ENCODE measurements at regions of chr2 and their contacts with region 1.

Region 1: GRCh38 chr2:38315707-38316333 is 61.3 kb downstream of the ATL2 start:
- DNase-seq: peak; percentile 63
- H3K4me3 ChIP-seq: no peak overlapping the region
- H3K27ac ChIP-seq: no peak overlapping the region
- H3K4me1 ChIP-seq: no peaks in the 10 kb centered on the region
- CTCF ChIP-seq: peak; percentile 91

Region 2: GRCh38 chr2:38159597-38159996 is 156.2 kb before region 1 on chr2:
- CTCF ChIA-PET with region 1: no interaction called
- POLR2A ChIA-PET with region 1: no interaction called
- intact Hi-C with region 1: no loop called
- DNase-seq: no peak
- H3K4me3 ChIP-seq: no peak overlapping the region
- H3K27ac ChIP-seq: no peak overlapping the region
- H3K4me1 ChIP-seq: no peaks in the 10 kb centered on the region
- CTCF ChIP-seq: no peak

Region 3: DNA sequence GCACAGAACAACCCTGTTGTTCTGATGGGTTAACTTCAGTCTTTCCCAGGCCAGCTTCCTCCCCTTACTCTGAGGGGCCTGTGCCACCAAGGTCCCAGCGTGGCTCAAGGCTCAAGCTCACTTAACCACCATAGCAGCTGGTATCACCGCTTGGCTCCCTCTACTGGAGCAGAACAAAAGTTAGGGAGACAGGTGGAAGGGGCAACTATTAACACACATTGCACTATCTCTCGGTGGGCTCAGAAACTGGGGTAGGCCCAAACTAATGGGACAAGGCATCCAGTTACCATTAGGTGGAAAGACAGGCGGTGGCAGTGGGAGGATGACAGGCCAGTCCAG is 149.9 kb after region 1 on chr2:
- CTCF ChIA-PET with region 1: interaction called, 16 read pairs
- POLR2A ChIA-PET with region 1: interaction called, 8 read pairs
- intact Hi-C with region 1: loop called (anchors 1 kb)
- DNase-seq: peak; percentile 88
- H3K4me3 ChIP-seq: no peak overlapping the region
- H3K27ac ChIP-seq: peak overlapping the region; percentile 13
- H3K4me1 ChIP-seq: peaks cover 24% of the 10 kb centered on the region
- CTCF ChIP-seq: peak; percentile 90

Region 4: GRCh38 chr2:38508311-38509039 is 192.7 kb after region 1 on chr2:
- CTCF ChIA-PET with region 1: interaction called, 7 read pairs
- POLR2A ChIA-PET with region 1: interaction called, 5 read pairs
- intact Hi-C with region 1: loop called (anchors 1 kb)
- DNase-seq: peak; percentile 94
- H3K4me3 ChIP-seq: no peak overlapping the region
- H3K27ac ChIP-seq: no peak overlapping the region
- H3K4me1 ChIP-seq: peaks cover 12% of the 10 kb centered on the region
- CTCF ChIP-seq: peak; percentile 98

Region 5: DNA sequence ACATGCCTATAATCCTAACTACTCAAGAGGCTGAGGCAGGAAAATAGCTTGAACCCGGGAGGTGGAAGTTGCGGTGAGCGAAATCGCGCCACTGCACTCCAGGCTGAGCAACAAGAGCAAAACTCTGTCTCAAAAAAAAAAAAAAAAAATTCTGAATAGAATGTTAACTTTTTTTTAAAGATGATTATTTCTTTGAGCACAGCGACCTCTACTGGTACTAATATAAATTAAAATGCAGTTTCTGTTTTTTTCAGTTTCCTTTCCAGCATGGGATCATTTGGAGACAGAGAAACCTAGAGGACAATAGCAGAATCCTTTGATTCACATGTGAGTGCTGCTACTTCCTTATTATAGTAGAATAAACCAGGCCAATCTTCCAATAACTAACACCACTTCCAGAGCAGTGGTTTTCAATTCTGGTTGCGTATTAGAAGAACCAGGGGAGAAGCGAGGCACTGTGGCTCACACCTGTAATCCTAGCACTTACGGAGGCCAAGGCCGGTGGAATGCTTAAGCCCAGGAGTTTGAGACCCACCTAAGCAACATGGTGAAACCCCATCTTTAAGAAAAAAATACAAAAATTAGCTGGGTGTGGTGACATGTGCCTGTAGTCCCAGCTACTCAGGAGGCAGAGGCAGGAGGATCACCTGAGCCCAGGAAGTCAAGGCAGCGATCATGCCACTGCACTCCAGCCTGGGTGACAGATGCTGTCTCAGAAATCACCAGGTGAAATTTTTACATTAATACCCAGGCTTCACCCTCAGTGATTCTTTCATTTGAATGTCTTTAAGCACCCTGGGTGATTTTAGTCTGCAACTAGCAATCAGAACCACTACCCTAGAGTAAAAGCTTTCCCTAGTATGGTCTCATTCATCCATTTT is 425.3 kb after region 1 on chr2:
- CTCF ChIA-PET with region 1: no interaction called
- POLR2A ChIA-PET with region 1: no interaction called
- intact Hi-C with region 1: loop called (anchors 10 kb)
- DNase-seq: peak; percentile 55
- H3K4me3 ChIP-seq: no peak overlapping the region
- H3K27ac ChIP-seq: peak overlapping the region; percentile 5
- H3K4me1 ChIP-seq: peaks cover 8% of the 10 kb centered on the region
- CTCF ChIP-seq: peak; percentile 88